CD14-positive monocyte (primary cell): ENCODE measurements at regions of chr22 and their contacts with region 1.

Region 1: GRCh38 chr22:46071451-46072109 is 78.7 kb upstream of the PPARA start:
- DNase-seq: peak; percentile 4 to 40 (median 36)
- H3K4me3 ChIP-seq: peak overlapping the region; percentile 42 to 89 (median 72)
- H3K4me3 Mint-ChIP-seq: peak overlapping the region; percentile 89 to 91
- H3K27ac ChIP-seq: peak overlapping the region; percentile 42 to 81
- H3K27ac Mint-ChIP-seq: peak overlapping the region in 6 of 7 donors; percentile 74 to 91 (median 84)
- H3K4me1 ChIP-seq: peaks cover 44 to 70% of the 10 kb centered on the region in 2 donors
- H3K4me1 Mint-ChIP-seq: peaks cover 55% of the 10 kb centered on the region
- H3K27me3 ChIP-seq: no peaks in the 10 kb centered on the region
- H3K27me3 Mint-ChIP-seq: no peaks in the 10 kb centered on the region
- CTCF ChIP-seq: no peak

Region 2: GRCh38 chr22:45399712-45400445 is 671.7 kb before region 1 on chr22:
- intact Hi-C with region 1: no loop called
- DNase-seq: no peak
- H3K4me3 ChIP-seq: no peak overlapping the region
- H3K4me3 Mint-ChIP-seq: no peak overlapping the region
- H3K27ac ChIP-seq: no peak overlapping the region
- H3K27ac Mint-ChIP-seq: no peak overlapping the region
- H3K4me1 ChIP-seq: peaks cover 11 to 19% of the 10 kb centered on the region in 2 donors
- H3K4me1 Mint-ChIP-seq: peaks cover 18% of the 10 kb centered on the region
- H3K27me3 ChIP-seq: no peaks in the 10 kb centered on the region
- H3K27me3 Mint-ChIP-seq: peaks cover 0 to 3% (median 3%) of the 10 kb centered on the region in 3 donors
- CTCF ChIP-seq: no peak

Region 3: DNA sequence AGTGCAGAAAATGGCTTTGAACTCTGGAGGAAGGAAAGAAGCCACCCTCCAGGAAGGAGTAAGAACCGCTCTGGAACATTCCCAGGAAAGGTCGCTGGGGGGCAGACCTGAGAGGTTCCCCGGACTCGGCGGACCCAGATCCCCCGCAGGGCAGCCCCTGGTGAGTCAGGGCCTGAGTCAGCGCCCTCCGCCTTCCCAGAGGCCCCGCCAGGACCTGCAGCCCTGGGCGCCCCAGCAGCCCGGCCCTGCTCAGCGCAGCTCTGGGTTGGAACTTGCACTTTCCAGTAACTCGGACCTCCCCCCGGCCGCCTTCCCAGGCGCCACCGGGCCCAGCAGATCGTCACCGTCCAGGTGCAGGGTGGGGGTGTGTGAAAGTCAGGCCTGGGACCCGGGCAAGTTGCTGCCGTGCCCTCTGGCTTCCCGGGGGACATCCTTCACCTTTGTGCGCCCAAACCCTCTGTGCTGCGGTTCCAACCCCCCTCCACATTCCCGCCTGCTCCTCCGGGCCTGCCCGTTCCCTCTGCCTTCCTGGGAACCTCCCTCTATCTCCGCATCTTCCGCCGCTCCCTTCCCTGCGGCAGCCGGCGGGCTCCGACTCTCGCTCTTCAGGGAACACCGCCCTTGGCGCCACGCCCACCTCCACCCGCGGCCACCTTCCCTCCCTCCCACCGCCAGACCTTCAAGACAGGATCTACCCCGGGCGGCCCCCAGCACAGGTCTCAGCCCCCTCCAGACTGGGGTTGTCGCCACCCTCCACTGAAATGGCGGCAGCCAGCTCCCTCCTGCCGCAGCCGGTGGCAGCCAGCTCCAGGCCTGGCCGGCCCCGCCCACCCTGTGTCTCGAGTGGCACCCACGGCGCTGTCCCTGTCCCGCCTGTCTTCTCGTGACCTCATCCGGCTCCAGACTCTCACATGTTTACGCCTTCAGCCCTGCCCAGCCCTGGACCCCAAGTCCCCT is 57.8 kb before region 1 on chr22:
- intact Hi-C with region 1: loop called in 1 of 2 experiments (anchors 5 kb)
- DNase-seq: peak; percentile 93 to 96 (median 95)
- H3K4me3 ChIP-seq: peak overlapping the region; percentile 68 to 89 (median 89)
- H3K4me3 Mint-ChIP-seq: peak overlapping the region; percentile 90 to 95
- H3K27ac ChIP-seq: peak overlapping the region; percentile 93 to 97
- H3K27ac Mint-ChIP-seq: peak overlapping the region; percentile 89 to 97 (median 94)
- H3K4me1 ChIP-seq: peaks cover 22 to 27% of the 10 kb centered on the region in 2 donors
- H3K4me1 Mint-ChIP-seq: peaks cover 28% of the 10 kb centered on the region
- H3K27me3 ChIP-seq: no peaks in the 10 kb centered on the region
- H3K27me3 Mint-ChIP-seq: peaks cover 0 to 5% (median 4%) of the 10 kb centered on the region in 3 donors
- CTCF ChIP-seq: peak; percentile 81

Region 4: GRCh38 chr22:46035742-46036557 is 35.6 kb before region 1 on chr22:
- intact Hi-C with region 1: loop called (anchors 2 to 5 kb)
- DNase-seq: peak; percentile 99 to 100 (median 99)
- H3K4me3 ChIP-seq: peak overlapping the region; percentile 51 to 83 (median 67)
- H3K4me3 Mint-ChIP-seq: peak overlapping the region; percentile 76 to 89
- H3K27ac ChIP-seq: peak overlapping the region; percentile 73 to 96
- H3K27ac Mint-ChIP-seq: peak overlapping the region; percentile 90 to 95 (median 93)
- H3K4me1 ChIP-seq: peaks cover 24 to 41% of the 10 kb centered on the region in 2 donors
- H3K4me1 Mint-ChIP-seq: peaks cover 37% of the 10 kb centered on the region
- H3K27me3 ChIP-seq: no peaks in the 10 kb centered on the region
- H3K27me3 Mint-ChIP-seq: no peaks in the 10 kb centered on the region
- CTCF ChIP-seq: no peak

Region 5: DNA sequence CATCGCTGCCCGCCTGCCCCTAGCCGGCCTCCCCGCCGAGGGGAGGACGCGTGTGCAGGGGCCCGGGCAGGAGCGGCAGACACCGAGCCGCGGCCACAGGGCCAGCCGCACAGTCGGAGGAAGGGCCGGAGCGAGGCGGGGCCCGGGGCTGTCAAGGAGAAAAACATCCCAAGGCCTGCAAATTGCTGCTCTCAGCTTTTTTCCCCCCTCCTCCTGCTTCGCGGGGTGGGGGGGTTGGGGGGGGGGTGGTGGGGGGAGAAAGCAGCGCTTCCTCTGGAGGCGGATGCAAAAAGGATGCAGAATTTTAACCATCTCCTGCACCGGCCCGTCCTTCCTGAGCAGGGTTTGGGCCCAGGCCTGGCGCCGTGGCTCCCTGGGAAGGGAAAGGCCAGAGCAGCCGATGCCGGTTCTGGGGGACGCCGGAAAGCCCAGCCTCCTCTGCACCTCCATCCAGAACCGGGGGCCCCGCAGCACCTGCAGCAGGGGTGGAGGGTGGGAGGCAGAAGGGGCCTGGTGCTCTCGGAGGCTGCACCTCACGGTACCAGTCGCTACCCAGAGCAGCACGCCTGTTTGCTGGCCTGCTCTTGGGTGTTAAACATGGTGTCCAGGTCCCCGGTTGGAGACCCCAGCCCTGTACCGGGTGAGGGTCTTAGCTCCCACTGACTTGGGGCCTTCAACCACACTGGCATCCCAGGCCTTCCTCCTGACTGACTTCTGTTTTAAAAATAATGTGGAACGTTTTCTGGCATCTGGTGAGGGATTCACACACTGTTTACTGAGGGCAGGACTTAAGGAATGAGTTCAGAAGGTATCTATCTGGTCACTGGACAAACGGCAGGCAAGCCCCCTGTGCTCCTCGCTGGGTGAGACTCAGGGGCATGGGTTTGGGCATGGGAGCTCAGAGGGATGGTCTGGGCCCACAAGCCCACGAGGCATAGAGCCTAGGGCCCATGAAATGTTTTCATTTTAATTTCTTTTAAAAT is 17.2 kb before region 1 on chr22:
- intact Hi-C with region 1: loop called in 1 of 2 experiments (anchors 2 kb)
- DNase-seq: peak in 2 of 3 donors; percentile 45 to 47
- H3K4me3 ChIP-seq: peak overlapping the region; percentile 68 to 88 (median 76)
- H3K4me3 Mint-ChIP-seq: peak overlapping the region; percentile 89 to 93
- H3K27ac ChIP-seq: peak overlapping the region; percentile 83 to 87
- H3K27ac Mint-ChIP-seq: peak overlapping the region in 6 of 7 donors; percentile 77 to 92 (median 86)
- H3K4me1 ChIP-seq: peaks cover 76 to 87% of the 10 kb centered on the region in 2 donors
- H3K4me1 Mint-ChIP-seq: peaks cover 75% of the 10 kb centered on the region
- H3K27me3 ChIP-seq: no peaks in the 10 kb centered on the region
- H3K27me3 Mint-ChIP-seq: no peaks in the 10 kb centered on the region
- CTCF ChIP-seq: no peak

Region 6: GRCh38 chr22:46084943-46085830 is 13.6 kb after region 1 on chr22:
- intact Hi-C with region 1: no loop called
- DNase-seq: no peak
- H3K4me3 ChIP-seq: no peak overlapping the region
- H3K4me3 Mint-ChIP-seq: no peak overlapping the region
- H3K27ac ChIP-seq: no peak overlapping the region
- H3K27ac Mint-ChIP-seq: peak overlapping the region in 1 of 7 donors; percentile 57
- H3K4me1 ChIP-seq: no peaks in the 10 kb centered on the region
- H3K4me1 Mint-ChIP-seq: no peaks in the 10 kb centered on the region
- H3K27me3 ChIP-seq: no peaks in the 10 kb centered on the region
- H3K27me3 Mint-ChIP-seq: no peaks in the 10 kb centered on the region
- CTCF ChIP-seq: no peak